Left ventricle myocardium superior (tissue), 1 donor: ENCODE measurements at regions of chr2 and their contacts with region 1.

Region 1: DNA sequence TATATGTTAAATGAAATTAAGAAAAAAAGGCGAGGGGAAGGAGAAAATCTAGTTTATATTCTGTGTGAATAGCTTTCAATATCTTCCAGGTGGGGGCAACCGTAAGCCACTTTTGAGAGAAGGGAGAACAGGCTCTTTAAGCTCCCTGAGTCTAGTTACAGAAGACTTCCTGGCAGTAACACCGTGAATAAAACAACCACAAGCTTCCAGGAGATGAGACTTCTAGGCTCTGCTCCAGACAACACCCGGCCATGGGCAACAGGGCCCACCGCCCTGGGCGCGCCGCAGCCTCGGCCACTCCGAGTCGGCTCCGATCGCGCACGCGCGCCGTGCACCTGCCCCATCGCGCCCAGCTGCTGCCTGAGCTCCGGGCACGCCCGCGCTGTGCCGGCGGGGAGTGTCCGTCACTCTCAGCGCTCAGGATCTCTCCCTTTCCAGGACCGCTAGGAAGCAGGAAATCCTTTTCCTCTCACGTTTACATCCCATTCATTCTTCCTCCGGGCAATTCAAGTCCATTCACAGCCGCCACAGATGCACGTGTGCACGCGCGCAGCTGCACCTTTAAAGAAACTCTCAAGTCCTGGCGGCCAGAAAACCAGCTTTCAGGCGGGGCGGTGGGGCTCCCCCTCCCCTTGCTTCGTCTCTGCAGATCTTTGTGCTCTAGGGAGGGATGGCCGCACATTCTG is 19.4 kb upstream of the PAX3 start:
- DNase-seq: peak; percentile 77
- ATAC-seq: peak; percentile 81

Region 2: DNA sequence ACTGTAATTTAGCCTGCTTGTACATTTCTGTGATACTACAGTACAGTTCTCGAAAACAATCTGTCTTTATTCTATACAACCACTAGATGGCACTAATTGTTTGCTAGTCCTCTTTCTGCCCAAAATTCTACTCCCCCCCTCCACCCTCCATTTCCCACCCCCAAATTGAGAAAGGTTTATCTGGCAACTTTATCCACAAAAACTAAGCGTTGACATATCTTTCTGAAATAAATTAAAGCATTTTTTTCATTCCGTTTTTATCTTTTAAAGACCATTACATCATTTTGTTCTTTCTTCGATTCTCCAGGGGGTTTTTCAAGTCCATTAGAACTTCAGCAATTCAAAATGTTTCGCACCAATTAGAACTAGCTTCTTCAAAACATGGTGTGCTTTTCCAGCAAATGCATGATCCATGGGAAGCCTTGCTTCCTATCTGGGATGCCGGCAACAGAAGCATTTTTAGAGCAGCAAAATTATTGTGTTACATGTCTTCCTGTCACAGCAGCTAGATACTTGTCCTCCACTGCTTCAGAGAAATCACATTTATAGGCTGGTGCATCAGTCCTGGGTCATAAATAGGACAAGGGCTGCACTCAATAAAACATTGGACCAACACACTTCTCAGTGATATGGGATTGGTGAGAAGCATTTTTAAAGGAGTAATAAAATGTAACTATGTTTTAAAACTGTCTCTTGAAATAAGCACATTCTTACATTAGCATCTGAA is 260.7 kb before region 1 on chr2:
- intact Hi-C with region 1: loop called (anchors 5 kb)
- DNase-seq: no peak
- ATAC-seq: peak; percentile 81

Region 3: GRCh38 chr2:222410534-222410933 is 92.4 kb after region 1 on chr2:
- intact Hi-C with region 1: no loop called
- DNase-seq: no peak
- ATAC-seq: no peak

Region 4: GRCh38 chr2:222561817-222562645 is 243.9 kb after region 1 on chr2:
- intact Hi-C with region 1: loop called (anchors 5 kb)
- DNase-seq: no peak
- ATAC-seq: peak; percentile 85